Ascending aorta (tissue), 2 donors: ENCODE measurements at regions of chr11 and their contacts with region 1.

Region 1: GRCh38 chr11:70128435-70128906 is 50.4 kb downstream of the ANO1 start:
- DNase-seq: peak in 1 of 2 donors; percentile 88
- H3K4me3 ChIP-seq: no peak overlapping the region
- H3K27ac ChIP-seq: peak overlapping the region; percentile 64 to 86
- H3K4me1 ChIP-seq: peaks cover 29 to 51% of the 10 kb centered on the region in 2 donors
- H3K27me3 ChIP-seq: no peaks in the 10 kb centered on the region
- CTCF ChIP-seq: peak; percentile 32 to 52 (median 33)

Region 2: GRCh38 chr11:69978856-69979614 is 149.4 kb before region 1 on chr11:
- intact Hi-C with region 1: loop called (anchors 2 kb)
- DNase-seq: no peak
- H3K4me3 ChIP-seq: peak overlapping the region in 1 of 2 donors; percentile 3
- H3K27ac ChIP-seq: peak overlapping the region; percentile 87 to 98
- H3K4me1 ChIP-seq: peaks cover 13 to 60% of the 10 kb centered on the region in 2 donors
- H3K27me3 ChIP-seq: no peaks in the 10 kb centered on the region
- CTCF ChIP-seq: no peak

Region 3: GRCh38 chr11:70016666-70017367 is 111.7 kb before region 1 on chr11:
- intact Hi-C with region 1: loop called (anchors 5 kb)
- DNase-seq: peak in 1 of 2 donors; percentile 83
- H3K4me3 ChIP-seq: peak overlapping the region in 1 of 2 donors; percentile 17
- H3K27ac ChIP-seq: peak overlapping the region; percentile 69 to 77
- H3K4me1 ChIP-seq: peaks cover 3 to 43% of the 10 kb centered on the region in 2 donors
- H3K27me3 ChIP-seq: no peaks in the 10 kb centered on the region
- CTCF ChIP-seq: no peak

Region 4: GRCh38 chr11:70105755-70106571 is 22.5 kb before region 1 on chr11:
- intact Hi-C with region 1: loop called (anchors 1 kb)
- DNase-seq: no peak
- H3K4me3 ChIP-seq: no peak overlapping the region
- H3K27ac ChIP-seq: peak overlapping the region; percentile 87 to 92
- H3K4me1 ChIP-seq: peaks cover 20 to 58% of the 10 kb centered on the region in 2 donors
- H3K27me3 ChIP-seq: no peaks in the 10 kb centered on the region
- CTCF ChIP-seq: peak in 2 of 3 experiments; percentile 11 to 15